Activated B cell treated with CpG ODN at 0.5 μM for 24 hours (primary cell): ENCODE measurements at regions of chr11 and their contacts with region 1.

Region 1: GRCh38 chr11:61384271-61385242 is 7.8 kb upstream of the TMEM216 start:
- DNase-seq: no peak
- ATAC-seq: no peak
- H3K4me3 Mint-ChIP-seq: no peak overlapping the region
- H3K27ac Mint-ChIP-seq: peak overlapping the region; percentile 56
- H3K4me1 Mint-ChIP-seq: peaks cover 10% of the 10 kb centered on the region
- H3K27me3 Mint-ChIP-seq: no peaks in the 10 kb centered on the region
- CTCF ChIP-seq: no peak

Region 2: DNA sequence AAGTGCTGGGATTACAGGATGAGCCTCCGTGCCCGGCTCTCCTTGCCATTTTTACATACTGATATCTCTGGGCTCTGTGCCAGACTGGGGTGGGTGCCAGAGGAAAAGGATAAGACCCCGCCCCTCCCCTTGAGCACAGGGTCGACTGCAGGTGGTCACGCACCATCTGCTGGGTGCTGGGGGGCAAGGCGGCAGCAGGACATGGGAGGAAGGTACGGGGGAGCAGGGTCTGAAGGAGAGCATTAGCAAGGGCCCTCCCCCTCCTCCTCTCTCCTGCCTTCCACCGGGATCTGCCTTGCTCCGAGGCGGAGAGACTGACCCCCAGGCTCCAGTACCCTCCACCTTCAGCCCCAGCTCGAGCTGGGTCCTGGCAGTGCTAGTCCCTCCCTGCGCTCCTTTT is 191.0 kb before region 1 on chr11:
- CTCF ChIA-PET with region 1: no interaction called
- POLR2A ChIA-PET with region 1: no interaction called
- intact Hi-C with region 1: no loop called
- DNase-seq: no peak
- ATAC-seq: no peak
- H3K4me3 Mint-ChIP-seq: no peak overlapping the region
- H3K27ac Mint-ChIP-seq: no peak overlapping the region
- H3K4me1 Mint-ChIP-seq: no peaks in the 10 kb centered on the region
- H3K27me3 Mint-ChIP-seq: peaks cover 4% of the 10 kb centered on the region
- CTCF ChIP-seq: no peak

Region 3: GRCh38 chr11:61254403-61255025 is 130.0 kb before region 1 on chr11:
- CTCF ChIA-PET with region 1: interaction called, 16 read pairs
- POLR2A ChIA-PET with region 1: interaction called, 3 read pairs
- intact Hi-C with region 1: no loop called
- DNase-seq: peak; percentile 49
- ATAC-seq: peak; percentile 93
- H3K4me3 Mint-ChIP-seq: no peak overlapping the region
- H3K27ac Mint-ChIP-seq: no peak overlapping the region
- H3K4me1 Mint-ChIP-seq: no peaks in the 10 kb centered on the region
- H3K27me3 Mint-ChIP-seq: no peaks in the 10 kb centered on the region
- CTCF ChIP-seq: no peak

Region 4: GRCh38 chr11:61353131-61354067 is 31.2 kb before region 1 on chr11:
- CTCF ChIA-PET with region 1: interaction called, 81 read pairs
- POLR2A ChIA-PET with region 1: interaction called, 109 read pairs
- intact Hi-C with region 1: loop called (anchors 1 kb)
- DNase-seq: no peak
- ATAC-seq: no peak
- H3K4me3 Mint-ChIP-seq: peak overlapping the region; percentile 90
- H3K27ac Mint-ChIP-seq: peak overlapping the region; percentile 98
- H3K4me1 Mint-ChIP-seq: peaks cover 69% of the 10 kb centered on the region
- H3K27me3 Mint-ChIP-seq: no peaks in the 10 kb centered on the region
- CTCF ChIP-seq: no peak

Region 5: DNA sequence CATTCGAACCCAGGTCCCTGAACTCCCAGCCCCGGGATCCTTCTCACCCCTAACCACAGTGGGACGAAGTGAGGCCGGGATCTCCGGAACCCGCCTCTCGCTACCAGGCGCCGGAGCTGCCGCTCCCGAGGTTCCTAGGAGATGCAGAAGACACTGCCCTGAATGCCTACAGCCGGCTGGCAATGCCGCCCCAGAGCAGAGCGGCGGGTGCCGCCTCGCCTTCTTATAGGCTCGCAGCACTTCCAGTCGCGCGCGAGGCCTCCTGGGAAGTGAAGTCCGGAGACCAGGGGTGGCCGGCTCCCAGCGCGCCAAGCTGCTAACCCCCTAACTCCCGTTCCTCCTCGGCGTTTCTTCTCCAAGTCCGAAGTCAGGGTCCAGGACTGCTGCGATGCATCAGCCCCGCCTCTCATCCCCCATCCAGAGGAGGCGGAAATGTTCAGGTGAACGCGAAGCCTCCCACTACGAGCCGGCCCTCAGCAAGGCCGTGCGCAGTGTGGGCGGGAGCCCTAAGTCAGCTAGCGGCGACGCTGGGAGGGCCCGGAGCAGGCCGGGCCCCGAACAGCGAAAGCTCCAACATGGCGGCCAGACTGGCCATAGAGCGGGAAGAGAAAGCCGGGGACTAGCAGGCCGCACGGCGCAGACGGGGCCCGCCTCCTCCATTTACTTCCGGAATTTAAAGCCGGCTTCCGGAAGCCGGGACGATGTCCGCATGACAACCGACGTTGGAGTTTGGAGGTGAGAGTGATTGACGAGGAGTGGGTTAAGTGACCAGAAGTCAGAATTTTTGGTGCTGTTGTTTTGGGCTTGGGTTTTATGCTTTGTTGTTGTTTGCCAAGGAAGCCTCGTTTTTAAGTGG is 22.6 kb before region 1 on chr11 and contains the starts of genes CYB561A3 and TMEM138:
- CTCF ChIA-PET with region 1: interaction called, 81 read pairs
- POLR2A ChIA-PET with region 1: interaction called, 109 read pairs
- intact Hi-C with region 1: no loop called
- DNase-seq: peak; percentile 84
- ATAC-seq: peak; percentile 76
- H3K4me3 Mint-ChIP-seq: peak within 1 kb of the TSS; percentile 100
- H3K27ac Mint-ChIP-seq: peak within 1 kb of the TSS; percentile 98
- H3K4me1 Mint-ChIP-seq: peaks cover 59% of the 10 kb centered on the region
- H3K27me3 Mint-ChIP-seq: no peaks in the 10 kb centered on the region
- CTCF ChIP-seq: no peak
- total RNA-seq, gene CYB561A3: 397 and 433 TPM in 2 replicates
- total RNA-seq, gene TMEM138: 69.7 and 81.2 TPM in 2 replicates

Region 6: GRCh38 chr11:61369372-61370219 is 15.0 kb before region 1 on chr11:
- CTCF ChIA-PET with region 1: interaction called, 52 read pairs
- POLR2A ChIA-PET with region 1: interaction called, 7 read pairs
- intact Hi-C with region 1: no loop called
- DNase-seq: no peak
- ATAC-seq: no peak
- H3K4me3 Mint-ChIP-seq: no peak overlapping the region
- H3K27ac Mint-ChIP-seq: no peak overlapping the region
- H3K4me1 Mint-ChIP-seq: peaks cover 3% of the 10 kb centered on the region
- H3K27me3 Mint-ChIP-seq: no peaks in the 10 kb centered on the region
- CTCF ChIP-seq: no peak

Region 7: GRCh38 chr11:61401558-61401957 is 17.0 kb after region 1 on chr11:
- CTCF ChIA-PET with region 1: interaction called, 11 read pairs
- POLR2A ChIA-PET with region 1: no interaction called
- intact Hi-C with region 1: no loop called
- DNase-seq: no peak
- ATAC-seq: no peak
- H3K4me3 Mint-ChIP-seq: no peak overlapping the region
- H3K27ac Mint-ChIP-seq: no peak overlapping the region
- H3K4me1 Mint-ChIP-seq: no peaks in the 10 kb centered on the region
- H3K27me3 Mint-ChIP-seq: no peaks in the 10 kb centered on the region
- CTCF ChIP-seq: no peak